GM18951 (cell line): ENCODE measurements at regions of chr19 and their contacts with region 1.

Region 1: DNA sequence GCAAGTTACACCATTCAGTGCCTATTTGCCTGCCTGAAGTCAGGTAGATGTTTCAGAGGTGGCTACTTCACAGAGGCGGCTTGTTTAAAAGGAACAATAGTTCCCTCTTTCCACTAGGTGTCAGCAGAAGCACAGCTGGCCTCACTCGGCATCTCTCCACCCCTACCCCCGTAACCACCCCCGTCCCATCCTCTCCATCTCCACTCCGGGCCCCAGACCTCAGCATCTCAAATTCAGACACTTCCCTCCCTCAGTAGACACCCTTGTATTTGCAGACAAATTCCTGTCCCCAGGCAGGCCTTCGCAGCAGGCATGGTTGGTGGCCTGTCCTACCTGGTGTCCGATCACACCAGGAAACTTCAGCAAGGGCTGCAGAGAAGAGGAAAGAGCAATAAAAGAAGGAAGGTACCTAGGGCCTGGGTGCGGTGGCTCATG is 9.1 kb upstream of the DPP9 start:
- POLR2A ChIP-seq: no peak

Region 2: GRCh38 chr19:4636151-4636717 is 96.5 kb before region 1 on chr19:
- in situ Hi-C with region 1: no loop called
- POLR2A ChIP-seq: no peak

Region 3: DNA sequence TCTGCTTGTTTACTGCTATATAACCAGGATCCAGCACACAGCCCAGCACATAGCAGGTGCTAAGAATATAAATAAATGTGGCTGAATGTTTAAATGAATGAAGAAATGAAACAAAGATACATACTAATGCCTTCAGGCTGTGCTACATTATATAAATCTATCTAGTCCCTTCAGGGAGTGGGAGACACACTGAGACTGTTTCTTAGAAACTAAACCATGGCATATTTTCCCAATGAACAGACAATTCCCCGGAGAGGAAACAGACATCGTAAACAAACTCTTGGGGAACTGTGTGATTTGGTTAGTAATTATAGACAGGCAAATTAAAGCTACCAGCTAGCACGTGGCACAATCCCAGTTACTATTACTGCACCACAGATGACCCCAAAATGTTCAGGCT is 49.1 kb after region 1 on chr19:
- in situ Hi-C with region 1: loop called (anchors 10 kb)
- POLR2A ChIP-seq: no peak

Region 4: GRCh38 chr19:4815426-4816201 is 82.9 kb after region 1 on chr19:
- in situ Hi-C with region 1: no loop called
- POLR2A ChIP-seq: no peak